CD4-positive, alpha-beta memory T cell (primary cell): ENCODE measurements at regions of chr1 and their contacts with region 1.

Region 1: GRCh38 chr1:12619792-12620487 is 1.9 kb upstream of the DHRS3 start:
- DNase-seq: peak; percentile 69 to 77 (median 73)
- H3K4me3 ChIP-seq: peak overlapping the region; percentile 87 to 90
- H3K4me3 Mint-ChIP-seq: peak overlapping the region; percentile 97 to 99 (median 98)
- H3K27ac ChIP-seq: peak overlapping the region; percentile 74
- H3K27ac Mint-ChIP-seq: peak overlapping the region; percentile 64 to 99 (median 76)
- H3K4me1 ChIP-seq: peaks cover 39% of the 10 kb centered on the region
- H3K4me1 Mint-ChIP-seq: peaks cover 18 to 56% (median 37%) of the 10 kb centered on the region in 4 donors
- H3K27me3 ChIP-seq: no peaks in the 10 kb centered on the region
- H3K27me3 Mint-ChIP-seq: peaks cover 0 to 2% of the 10 kb centered on the region in 2 donors

Region 2: GRCh38 chr1:11845641-11846335 is 774.2 kb before region 1 on chr1:
- CTCF ChIA-PET with region 1: no interaction called
- POLR2A ChIA-PET with region 1: no interaction called
- intact Hi-C with region 1: no loop called
- DNase-seq: peak in 4 of 5 donors; percentile 6 to 35 (median 22)
- H3K4me3 ChIP-seq: no peak overlapping the region
- H3K4me3 Mint-ChIP-seq: no peak overlapping the region
- H3K27ac ChIP-seq: no peak overlapping the region
- H3K27ac Mint-ChIP-seq: no peak overlapping the region
- H3K4me1 ChIP-seq: no peaks in the 10 kb centered on the region
- H3K4me1 Mint-ChIP-seq: peaks cover 0 to 7% (median 1%) of the 10 kb centered on the region in 4 donors
- H3K27me3 ChIP-seq: no peaks in the 10 kb centered on the region
- H3K27me3 Mint-ChIP-seq: no peaks in the 10 kb centered on the region

Region 3: GRCh38 chr1:12314333-12314903 is 305.5 kb before region 1 on chr1:
- CTCF ChIA-PET with region 1: interaction called, 39 read pairs
- POLR2A ChIA-PET with region 1: interaction called, 3 read pairs
- intact Hi-C with region 1: loop called (anchors 1 kb)
- DNase-seq: peak in 4 of 5 donors; percentile 18 to 32 (median 26)
- H3K4me3 ChIP-seq: no peak overlapping the region
- H3K4me3 Mint-ChIP-seq: no peak overlapping the region
- H3K27ac ChIP-seq: no peak overlapping the region
- H3K27ac Mint-ChIP-seq: peak overlapping the region in 1 of 7 donors; percentile 48
- H3K4me1 ChIP-seq: no peaks in the 10 kb centered on the region
- H3K4me1 Mint-ChIP-seq: peaks cover 0 to 2% (median 0%) of the 10 kb centered on the region in 4 donors
- H3K27me3 ChIP-seq: no peaks in the 10 kb centered on the region
- H3K27me3 Mint-ChIP-seq: no peaks in the 10 kb centered on the region

Region 4: DNA sequence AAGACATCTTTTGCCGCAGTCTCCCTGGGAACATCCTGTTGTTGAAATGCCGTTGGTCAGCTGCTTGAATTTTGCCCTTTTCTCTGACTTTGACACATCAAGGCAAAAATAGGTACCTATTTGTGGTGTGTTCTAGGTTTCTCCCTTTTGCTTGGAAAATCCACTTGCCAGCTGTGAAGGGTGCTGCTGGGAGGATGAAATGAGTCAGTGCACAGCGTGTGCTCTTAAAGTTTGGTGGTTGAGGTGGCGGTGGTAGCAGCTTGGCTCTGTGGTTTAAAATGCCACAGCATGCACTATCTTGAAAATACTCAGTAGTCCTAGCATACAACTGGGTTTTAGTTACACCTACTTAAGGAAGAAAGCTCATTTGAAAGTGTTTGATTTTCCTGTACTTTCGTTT is 185.8 kb before region 1 on chr1:
- CTCF ChIA-PET with region 1: interaction called, 6 read pairs
- POLR2A ChIA-PET with region 1: interaction called, 46 read pairs
- intact Hi-C with region 1: no loop called
- DNase-seq: peak; percentile 29 to 74 (median 41)
- H3K4me3 ChIP-seq: peak overlapping the region in 1 of 2 donors; percentile 9
- H3K4me3 Mint-ChIP-seq: peak overlapping the region in 7 of 8 donors; percentile 42 to 83 (median 78)
- H3K27ac ChIP-seq: peak overlapping the region; percentile 4
- H3K27ac Mint-ChIP-seq: peak overlapping the region; percentile 83 to 94 (median 90)
- H3K4me1 ChIP-seq: peaks cover 59% of the 10 kb centered on the region
- H3K4me1 Mint-ChIP-seq: peaks cover 47 to 78% (median 57%) of the 10 kb centered on the region in 4 donors
- H3K27me3 ChIP-seq: no peaks in the 10 kb centered on the region
- H3K27me3 Mint-ChIP-seq: no peaks in the 10 kb centered on the region

Region 5: DNA sequence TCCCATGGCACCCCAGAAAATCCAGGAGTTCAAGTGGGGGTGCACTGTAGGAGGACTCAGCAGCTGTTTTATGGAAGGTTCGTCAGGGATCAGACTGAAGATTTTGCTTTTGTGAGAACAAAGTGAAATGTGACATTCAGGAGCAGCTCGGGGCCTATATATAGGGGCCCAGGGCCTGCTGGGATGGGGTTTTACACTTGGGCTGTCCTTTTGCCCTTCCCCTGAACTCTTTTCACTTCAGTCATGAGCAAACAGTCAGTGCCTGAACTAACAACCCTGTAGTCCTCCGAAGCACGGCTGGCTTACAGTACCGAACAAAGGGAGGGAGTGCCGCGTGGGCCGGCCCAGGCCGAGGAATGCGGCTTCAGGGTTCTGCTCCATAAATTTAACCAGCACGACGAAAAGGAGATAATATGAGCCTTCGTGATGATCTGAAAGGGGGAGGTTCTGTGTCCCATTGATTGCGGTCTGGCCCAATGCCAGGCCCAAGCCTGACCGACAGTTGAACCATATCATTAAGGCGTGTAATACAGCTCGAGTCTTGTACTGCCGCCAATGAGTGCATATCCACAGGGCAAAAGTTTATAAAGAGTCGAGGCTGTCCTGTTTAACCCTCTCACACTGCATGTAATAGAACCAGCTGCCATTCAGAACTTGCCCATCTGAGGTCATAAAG is 141.9 kb before region 1 on chr1:
- CTCF ChIA-PET with region 1: interaction called, 4 read pairs
- POLR2A ChIA-PET with region 1: interaction called, 32 read pairs
- intact Hi-C with region 1: no loop called
- DNase-seq: peak in 3 of 5 donors; percentile 9 to 53 (median 22)
- H3K4me3 ChIP-seq: peak overlapping the region in 1 of 2 donors; percentile 9
- H3K4me3 Mint-ChIP-seq: peak overlapping the region in 7 of 8 donors; percentile 59 to 84 (median 78)
- H3K27ac ChIP-seq: peak overlapping the region; percentile 38
- H3K27ac Mint-ChIP-seq: peak overlapping the region; percentile 89 to 94 (median 92)
- H3K4me1 ChIP-seq: peaks cover 93% of the 10 kb centered on the region
- H3K4me1 Mint-ChIP-seq: peaks cover 69 to 92% (median 81%) of the 10 kb centered on the region in 4 donors
- H3K27me3 ChIP-seq: no peaks in the 10 kb centered on the region
- H3K27me3 Mint-ChIP-seq: no peaks in the 10 kb centered on the region

Region 6: DNA sequence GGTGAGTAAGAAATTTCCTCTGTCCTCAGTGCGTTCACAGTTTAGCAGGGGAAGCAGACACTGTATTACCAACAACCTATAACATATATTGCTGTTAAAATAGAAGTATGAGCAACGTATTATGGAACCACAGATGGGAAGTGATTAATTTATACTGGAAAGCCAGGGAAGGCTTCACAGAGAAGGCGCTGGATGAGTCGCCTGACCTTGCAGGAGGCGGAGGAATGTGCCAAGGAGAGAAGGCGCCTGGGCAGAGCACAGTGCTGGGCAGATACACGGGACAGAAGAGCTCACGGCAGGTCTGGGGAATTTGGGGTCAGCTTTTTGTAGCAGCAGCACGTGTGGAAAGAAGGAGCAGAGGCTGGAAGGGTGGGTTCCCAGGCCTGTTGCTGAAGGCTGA is 118.3 kb before region 1 on chr1:
- CTCF ChIA-PET with region 1: no interaction called
- POLR2A ChIA-PET with region 1: no interaction called
- intact Hi-C with region 1: no loop called
- DNase-seq: no peak
- H3K4me3 ChIP-seq: no peak overlapping the region
- H3K4me3 Mint-ChIP-seq: no peak overlapping the region
- H3K27ac ChIP-seq: no peak overlapping the region
- H3K27ac Mint-ChIP-seq: peak overlapping the region in 5 of 7 donors; percentile 49 to 92 (median 68)
- H3K4me1 ChIP-seq: no peaks in the 10 kb centered on the region
- H3K4me1 Mint-ChIP-seq: peaks cover 0 to 12% (median 3%) of the 10 kb centered on the region in 4 donors
- H3K27me3 ChIP-seq: no peaks in the 10 kb centered on the region
- H3K27me3 Mint-ChIP-seq: no peaks in the 10 kb centered on the region

Region 7: GRCh38 chr1:12604114-12604874 is 15.6 kb before region 1 on chr1:
- CTCF ChIA-PET with region 1: interaction called, 196 read pairs
- POLR2A ChIA-PET with region 1: interaction called, 327 read pairs
- intact Hi-C with region 1: loop called (anchors 1 kb)
- DNase-seq: peak; percentile 70 to 91 (median 76)
- H3K4me3 ChIP-seq: no peak overlapping the region
- H3K4me3 Mint-ChIP-seq: peak overlapping the region in 7 of 8 donors; percentile 59 to 81 (median 68)
- H3K27ac ChIP-seq: peak overlapping the region; percentile 27
- H3K27ac Mint-ChIP-seq: peak overlapping the region; percentile 57 to 96 (median 91)
- H3K4me1 ChIP-seq: peaks cover 51% of the 10 kb centered on the region
- H3K4me1 Mint-ChIP-seq: peaks cover 28 to 85% (median 54%) of the 10 kb centered on the region in 4 donors
- H3K27me3 ChIP-seq: no peaks in the 10 kb centered on the region
- H3K27me3 Mint-ChIP-seq: no peaks in the 10 kb centered on the region

Region 8: GRCh38 chr1:13487143-13487868 is 867.4 kb after region 1 on chr1:
- CTCF ChIA-PET with region 1: no interaction called
- POLR2A ChIA-PET with region 1: no interaction called
- intact Hi-C with region 1: no loop called
- DNase-seq: no peak
- H3K4me3 ChIP-seq: no peak overlapping the region
- H3K4me3 Mint-ChIP-seq: no peak overlapping the region
- H3K27ac ChIP-seq: no peak overlapping the region
- H3K27ac Mint-ChIP-seq: no peak overlapping the region
- H3K4me1 ChIP-seq: no peaks in the 10 kb centered on the region
- H3K4me1 Mint-ChIP-seq: no peaks in the 10 kb centered on the region
- H3K27me3 ChIP-seq: no peaks in the 10 kb centered on the region
- H3K27me3 Mint-ChIP-seq: peaks cover 13 to 20% of the 10 kb centered on the region in 2 donors